Activated CD8-positive, alpha-beta T cell treated with anti-CD3 and anti-CD28 coated beads for 36 hours (primary cell): ENCODE measurements at regions of chr22 and their contacts with region 1.

Region 1: DNA sequence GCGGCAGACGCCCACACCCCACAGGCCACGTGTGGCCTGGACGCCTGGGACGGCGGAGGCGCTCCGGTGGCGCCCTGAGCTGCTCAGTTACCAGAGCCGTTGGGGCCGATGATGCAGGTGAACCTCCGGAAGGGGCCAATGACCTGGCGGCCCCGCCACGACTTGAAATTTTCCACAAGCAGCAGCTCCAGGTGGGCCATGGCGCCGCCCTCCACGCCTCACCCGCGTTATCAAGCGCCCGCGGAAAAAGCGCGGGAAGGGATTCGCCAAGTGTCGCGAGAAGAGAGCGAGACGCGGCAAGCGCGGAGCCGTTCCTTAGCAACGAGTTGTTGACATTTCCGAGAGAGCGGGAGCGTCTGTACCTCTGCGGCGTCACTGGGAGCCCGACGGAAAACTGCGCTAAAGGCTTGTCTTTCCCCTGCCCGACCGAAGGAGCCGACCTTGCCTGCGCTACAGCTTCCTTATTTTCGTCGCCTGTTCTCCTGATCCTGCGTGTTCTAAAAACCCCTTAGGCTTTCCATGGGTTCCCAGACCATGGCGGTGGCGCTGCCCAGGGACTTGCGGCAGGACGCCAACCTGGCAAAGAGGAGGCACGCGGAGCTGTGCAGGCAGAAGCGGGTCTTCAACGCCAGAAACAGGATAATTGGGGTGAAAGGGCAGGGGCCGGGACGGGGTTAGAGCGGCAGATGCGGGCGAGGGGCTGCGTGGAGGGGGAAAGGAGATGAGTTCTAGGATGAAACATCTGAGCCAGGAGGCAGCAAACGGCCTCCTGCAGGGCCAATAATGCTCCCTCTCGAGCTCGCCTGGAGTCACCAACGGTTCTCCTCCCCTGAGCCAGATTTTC is at the starts of genes RIBC2 and SMC1B:
- DNase-seq: peak; percentile 93
- ATAC-seq: peak; percentile 94
- H3K4me3 Mint-ChIP-seq: peak within 1 kb of the TSS; percentile 76
- H3K27ac Mint-ChIP-seq: peak within 1 kb of the TSS; percentile 85
- H3K4me1 Mint-ChIP-seq: peaks cover 9% of the 10 kb centered on the region
- H3K27me3 Mint-ChIP-seq: no peaks in the 10 kb centered on the region
- CTCF ChIP-seq: no peak
- total RNA-seq, gene RIBC2: 9.5 to 10.4 TPM
- total RNA-seq, gene SMC1B: 1.8 TPM

Region 2: DNA sequence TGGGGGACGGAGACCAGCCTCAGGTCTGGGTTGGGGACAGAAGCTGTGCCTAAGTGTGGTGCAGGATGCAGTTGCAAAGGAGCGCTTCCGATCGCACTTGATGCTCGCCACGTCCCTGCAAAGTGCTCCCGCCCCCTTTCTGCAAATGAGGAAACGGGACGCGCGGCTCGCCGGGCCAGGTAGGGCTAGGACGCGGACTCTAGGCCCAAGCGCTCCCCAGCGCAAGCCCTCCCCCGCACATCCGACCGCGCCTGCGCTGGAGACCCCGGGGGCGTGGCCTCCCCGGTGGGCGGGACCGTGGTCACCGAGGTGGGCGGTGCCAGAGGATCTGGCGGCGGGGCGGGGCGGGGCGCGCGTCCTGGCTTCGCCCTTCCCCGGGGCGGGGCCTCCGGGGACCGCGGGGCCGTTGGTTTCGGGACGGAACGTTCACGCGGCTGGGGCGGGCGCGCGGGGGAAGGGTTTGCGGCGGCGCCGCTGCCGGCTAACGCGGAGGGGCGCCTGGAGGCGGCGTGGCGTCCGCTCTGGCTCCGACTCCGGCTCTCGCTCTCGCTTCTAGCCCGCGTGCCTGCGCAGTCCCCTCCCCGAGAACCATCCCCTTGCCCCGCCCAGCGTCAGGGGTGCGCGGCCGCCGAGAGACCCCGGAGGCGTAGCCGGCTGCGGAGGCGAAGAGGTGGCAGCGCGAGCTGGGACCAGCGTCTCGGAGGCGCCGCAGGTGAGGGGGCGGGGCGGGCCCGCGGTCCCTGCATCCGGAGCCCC is 103.9 kb before region 1 on chr22 and contains the start of gene FAM118A:
- CTCF ChIA-PET with region 1: no interaction called
- POLR2A ChIA-PET with region 1: interaction called, 12 read pairs
- intact Hi-C with region 1: no loop called
- DNase-seq: peak; percentile 92
- ATAC-seq: peak; percentile 89
- H3K4me3 Mint-ChIP-seq: peak within 1 kb of the TSS; percentile 85
- H3K27ac Mint-ChIP-seq: peak within 1 kb of the TSS; percentile 94
- H3K4me1 Mint-ChIP-seq: peaks cover 44% of the 10 kb centered on the region
- H3K27me3 Mint-ChIP-seq: no peaks in the 10 kb centered on the region
- CTCF ChIP-seq: no peak
- total RNA-seq, gene FAM118A: 30.6 to 32.4 TPM

Region 3: GRCh38 chr22:45478108-45478771 is 64.7 kb after region 1 on chr22:
- CTCF ChIA-PET with region 1: no interaction called
- POLR2A ChIA-PET with region 1: no interaction called
- intact Hi-C with region 1: no loop called
- DNase-seq: no peak
- ATAC-seq: no peak
- H3K4me3 Mint-ChIP-seq: no peak overlapping the region
- H3K27ac Mint-ChIP-seq: no peak overlapping the region
- H3K4me1 Mint-ChIP-seq: no peaks in the 10 kb centered on the region
- H3K27me3 Mint-ChIP-seq: peaks cover 2% of the 10 kb centered on the region
- CTCF ChIP-seq: no peak

Region 4: GRCh38 chr22:45577746-45578523 is 164.3 kb after region 1 on chr22:
- CTCF ChIA-PET with region 1: no interaction called
- POLR2A ChIA-PET with region 1: no interaction called
- intact Hi-C with region 1: no loop called
- DNase-seq: peak; percentile 83
- ATAC-seq: peak; percentile 89
- H3K4me3 Mint-ChIP-seq: no peak overlapping the region
- H3K27ac Mint-ChIP-seq: no peak overlapping the region
- H3K4me1 Mint-ChIP-seq: no peaks in the 10 kb centered on the region
- H3K27me3 Mint-ChIP-seq: peaks cover 7% of the 10 kb centered on the region
- CTCF ChIP-seq: peak; percentile 98